ENCODE measurements at regions of chr6 and their contacts with region 1.

Region 1: DNA sequence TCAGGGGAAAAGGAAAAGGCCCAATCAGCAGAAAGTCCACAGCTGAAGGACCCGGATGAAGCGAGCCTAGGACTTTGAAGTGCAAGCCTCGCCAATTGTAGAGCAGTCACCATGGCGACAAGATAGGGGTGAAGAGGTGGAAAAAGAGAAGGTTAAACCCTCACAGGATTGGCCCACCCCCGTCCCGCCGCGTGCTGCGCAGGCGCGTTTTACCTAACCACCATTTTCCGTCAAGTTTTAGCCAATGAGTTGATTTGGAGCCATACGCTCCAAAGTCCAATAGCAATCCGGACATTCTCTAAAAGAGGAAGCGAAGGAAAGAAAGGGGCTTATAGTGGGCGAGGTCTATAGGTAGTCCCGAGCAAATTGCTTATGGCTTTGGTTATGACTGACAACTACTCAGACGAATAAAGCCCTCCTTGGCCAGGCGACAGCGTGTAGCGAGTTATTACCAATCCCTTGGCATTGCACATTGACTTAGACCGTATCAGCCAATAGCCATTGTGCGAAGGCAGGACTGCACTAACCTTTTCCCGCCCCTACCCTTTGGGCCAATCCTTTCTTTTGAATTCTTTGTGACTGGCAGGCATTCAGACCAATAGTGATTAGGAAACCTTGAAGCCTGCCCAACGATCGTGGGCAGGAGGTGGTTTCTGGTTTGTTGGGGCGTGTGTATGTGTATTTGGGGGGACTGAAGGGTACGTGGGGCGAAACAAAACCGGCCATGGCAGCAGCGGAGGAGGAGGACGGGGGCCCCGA is at the start of gene RNF5:
- DNase-seq: peak; percentile 95
- H3K4me3 Mint-ChIP-seq: peak within 1 kb of the TSS; percentile 91
- H3K27ac Mint-ChIP-seq: peak within 1 kb of the TSS; percentile 90
- H3K4me1 Mint-ChIP-seq: peaks cover 62% of the 10 kb centered on the region
- H3K27me3 Mint-ChIP-seq: no peaks in the 10 kb centered on the region
- total RNA-seq, gene RNF5: 44.0 to 45.4 TPM

Region 2: GRCh38 chr6:32120573-32121059 is 57.4 kb before region 1 on chr6:
- CTCF ChIA-PET with region 1: no interaction called
- POLR2A ChIA-PET with region 1: no interaction called
- DNase-seq: no peak
- H3K4me3 Mint-ChIP-seq: no peak overlapping the region
- H3K27ac Mint-ChIP-seq: no peak overlapping the region
- H3K4me1 Mint-ChIP-seq: peaks cover 8% of the 10 kb centered on the region
- H3K27me3 Mint-ChIP-seq: no peaks in the 10 kb centered on the region

Region 3: GRCh38 chr6:32195652-32195901 is 17.6 kb after region 1 on chr6:
- CTCF ChIA-PET with region 1: interaction called, 20 read pairs
- POLR2A ChIA-PET with region 1: interaction called, 155 read pairs
- DNase-seq: peak; percentile 100
- H3K4me3 Mint-ChIP-seq: peak overlapping the region; percentile 95
- H3K27ac Mint-ChIP-seq: peak overlapping the region; percentile 98
- H3K4me1 Mint-ChIP-seq: peaks cover 35% of the 10 kb centered on the region
- H3K27me3 Mint-ChIP-seq: peaks cover 2% of the 10 kb centered on the region

Measured in activated CD4-positive, alpha-beta memory T cell treated with anti-CD3 and anti-CD28 coated beads, Interleukin-2, amount 10 ng/mL, durations not matched to agents 7 days and 5 days (primary cell).